Activated CD4-positive, alpha-beta T cell treated with anti-CD3 and anti-CD28 coated beads, Interleukin-2, amount 10 ng/mL, durations not matched to agents 24 days and 14 days (primary cell): ENCODE measurements at regions of chr5 and their contacts with region 1.

Region 1: DNA sequence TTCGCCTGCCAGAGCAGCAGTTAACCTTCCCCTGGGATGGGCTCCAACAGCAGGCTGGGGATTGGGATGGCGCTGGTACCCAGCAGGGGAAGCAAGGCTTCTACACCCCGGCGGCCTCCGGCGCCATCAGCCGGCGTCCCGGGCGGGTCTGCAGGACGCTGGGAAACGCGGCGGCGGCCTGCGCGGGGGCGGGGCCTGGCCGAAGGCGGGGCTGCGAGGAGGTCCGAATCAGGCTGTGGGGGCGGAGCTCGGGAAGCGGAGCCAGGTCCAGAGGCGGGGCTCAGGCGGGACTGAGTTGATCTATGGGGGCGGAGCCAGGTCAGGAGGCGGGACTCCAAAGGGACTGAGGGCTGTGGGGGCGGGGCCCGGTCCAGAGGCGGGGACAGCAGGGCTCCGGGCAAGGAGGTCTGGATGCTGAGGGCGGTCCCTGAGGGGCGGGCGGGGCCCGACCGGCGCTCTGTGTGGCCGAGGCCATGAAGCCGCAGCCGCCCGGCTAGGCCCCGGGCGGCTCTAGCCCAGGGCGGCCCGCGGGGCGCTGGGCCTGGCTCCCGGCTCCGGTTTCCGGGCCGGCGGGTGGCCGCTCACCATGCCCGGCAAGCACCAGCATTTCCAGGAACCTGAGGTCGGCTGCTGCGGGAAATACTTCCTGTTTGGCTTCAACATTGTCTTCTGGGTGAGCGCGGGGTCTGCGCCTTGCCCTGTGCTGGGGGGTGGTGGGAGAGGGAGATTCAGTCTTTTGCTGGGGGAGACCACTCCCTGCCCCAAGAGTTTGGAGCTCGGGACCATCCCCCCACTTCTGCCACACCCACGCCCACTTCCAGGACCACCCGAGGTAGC is at the start of gene TSPAN17:
- DNase-seq: peak; percentile 100
- H3K4me3 Mint-ChIP-seq: peak within 1 kb of the TSS; percentile 91
- H3K27ac Mint-ChIP-seq: peak within 1 kb of the TSS; percentile 89
- H3K4me1 Mint-ChIP-seq: peaks cover 39% of the 10 kb centered on the region
- H3K27me3 Mint-ChIP-seq: no peaks in the 10 kb centered on the region
- total RNA-seq, gene TSPAN17: 29.3 and 32.0 TPM in 2 replicates

Region 2: GRCh38 chr5:176573564-176574296 is 73.5 kb before region 1 on chr5:
- intact Hi-C with region 1: loop called (anchors 1 kb)
- DNase-seq: peak; percentile 93
- H3K4me3 Mint-ChIP-seq: no peak overlapping the region
- H3K27ac Mint-ChIP-seq: no peak overlapping the region
- H3K4me1 Mint-ChIP-seq: peaks cover 6% of the 10 kb centered on the region
- H3K27me3 Mint-ChIP-seq: peaks cover 9% of the 10 kb centered on the region

Region 3: GRCh38 chr5:176619203-176619568 is 28.1 kb before region 1 on chr5:
- intact Hi-C with region 1: loop called (anchors 1 kb)
- DNase-seq: peak; percentile 94
- H3K4me3 Mint-ChIP-seq: peak overlapping the region; percentile 43
- H3K27ac Mint-ChIP-seq: no peak overlapping the region
- H3K4me1 Mint-ChIP-seq: peaks cover 9% of the 10 kb centered on the region
- H3K27me3 Mint-ChIP-seq: peaks cover 76% of the 10 kb centered on the region

Region 4: GRCh38 chr5:176693477-176693851 is 46.2 kb after region 1 on chr5:
- intact Hi-C with region 1: no loop called
- DNase-seq: no peak
- H3K4me3 Mint-ChIP-seq: no peak overlapping the region
- H3K27ac Mint-ChIP-seq: no peak overlapping the region
- H3K4me1 Mint-ChIP-seq: no peaks in the 10 kb centered on the region
- H3K27me3 Mint-ChIP-seq: peaks cover 55% of the 10 kb centered on the region

Region 5: GRCh38 chr5:176774216-176775170 is 127.2 kb after region 1 on chr5:
- intact Hi-C with region 1: no loop called
- DNase-seq: no peak
- H3K4me3 Mint-ChIP-seq: no peak overlapping the region
- H3K27ac Mint-ChIP-seq: no peak overlapping the region
- H3K4me1 Mint-ChIP-seq: no peaks in the 10 kb centered on the region
- H3K27me3 Mint-ChIP-seq: peaks cover 10% of the 10 kb centered on the region

Region 6: DNA sequence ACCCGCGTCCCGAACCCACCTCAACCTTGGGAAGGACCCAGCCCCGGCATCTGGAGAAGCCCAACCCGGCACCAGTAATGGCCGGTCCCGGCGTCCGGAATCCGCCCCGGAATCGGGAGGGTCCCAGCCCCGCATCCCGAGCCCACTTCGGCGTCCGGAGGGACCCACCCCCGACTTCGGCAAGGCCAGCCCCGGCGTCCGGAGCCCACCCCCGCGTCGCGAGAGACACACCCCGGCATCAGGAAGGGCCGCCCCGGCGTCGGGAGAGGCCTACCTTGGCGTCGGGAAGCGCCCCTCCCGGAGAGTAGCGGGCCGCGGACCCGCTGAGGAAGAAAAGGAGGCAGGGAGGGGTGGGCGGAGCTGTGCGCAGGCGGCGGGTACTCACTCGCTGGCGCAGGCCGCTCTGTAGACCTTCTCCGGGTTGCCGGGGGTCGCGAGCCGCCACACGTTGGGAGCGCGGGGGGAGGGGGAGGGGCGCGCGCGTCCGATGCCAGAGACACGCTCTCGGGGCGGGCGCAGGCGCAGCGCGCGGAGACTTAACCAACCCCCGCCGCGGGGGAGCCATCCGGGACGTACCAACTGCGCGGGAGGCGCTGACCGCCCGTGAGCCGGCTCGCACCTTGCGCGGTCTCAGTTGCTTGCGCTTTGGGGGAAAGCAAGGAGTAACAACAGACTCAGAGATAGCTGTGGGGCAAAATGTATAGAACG is 359.2 kb after region 1 on chr5 and contains the start of gene UIMC1:
- intact Hi-C with region 1: loop called (anchors 5 kb)
- DNase-seq: peak; percentile 98
- H3K4me3 Mint-ChIP-seq: peak within 1 kb of the TSS; percentile 96
- H3K27ac Mint-ChIP-seq: peak within 1 kb of the TSS; percentile 92
- H3K4me1 Mint-ChIP-seq: peaks cover 16% of the 10 kb centered on the region
- H3K27me3 Mint-ChIP-seq: no peaks in the 10 kb centered on the region
- total RNA-seq, gene UIMC1: 65.2 and 68.5 TPM in 2 replicates

Region 7: GRCh38 chr5:177086924-177087706 is 439.9 kb after region 1 on chr5:
- intact Hi-C with region 1: loop called (anchors 1 kb)
- DNase-seq: peak; percentile 90
- H3K4me3 Mint-ChIP-seq: peak overlapping the region; percentile 4
- H3K27ac Mint-ChIP-seq: no peak overlapping the region
- H3K4me1 Mint-ChIP-seq: peaks cover 7% of the 10 kb centered on the region
- H3K27me3 Mint-ChIP-seq: peaks cover 36% of the 10 kb centered on the region